MCF 10A (cell line): ENCODE measurements at regions of chr1 and their contacts with region 1.

Region 1: DNA sequence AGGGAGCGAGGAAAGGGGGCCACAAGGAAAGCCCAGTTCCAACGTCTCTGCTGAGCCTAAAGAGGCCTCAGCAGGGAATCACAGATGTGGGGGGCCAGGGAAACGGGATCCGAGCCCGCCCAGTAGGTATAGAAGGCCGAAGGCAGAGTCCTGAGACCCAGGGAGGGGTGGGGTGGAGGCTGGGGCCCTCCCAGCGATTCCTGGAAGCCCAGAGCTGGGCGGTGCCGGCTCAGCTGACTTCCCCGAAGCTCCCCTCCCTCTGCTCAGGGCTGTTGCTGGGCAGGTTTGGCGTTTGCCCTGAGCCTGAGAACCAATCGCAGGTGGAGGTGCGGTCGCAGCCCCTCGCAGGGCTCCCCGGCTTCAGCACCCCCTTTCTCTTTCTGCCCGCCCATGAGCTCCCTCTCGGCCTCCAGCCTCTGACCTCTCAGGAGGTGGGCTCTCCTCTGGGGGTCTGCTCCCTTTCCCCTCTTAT is 12.8 kb downstream of the ADAMTSL4 start:
- DNase-seq: peak; percentile 98
- H3K4me3 Mint-ChIP-seq: peak overlapping the region; percentile 74
- H3K27ac Mint-ChIP-seq: peak overlapping the region; percentile 99
- H3K4me1 Mint-ChIP-seq: peaks cover 52% of the 10 kb centered on the region
- H3K27me3 Mint-ChIP-seq: no peaks in the 10 kb centered on the region
- CTCF ChIP-seq: no peak

Region 2: GRCh38 chr1:150363426-150364230 is 198.4 kb before region 1 on chr1 and contains the start of gene RPRD2:
- CTCF ChIA-PET with region 1: no interaction called
- POLR2A ChIA-PET with region 1: interaction called, 32 read pairs
- intact Hi-C with region 1: no loop called
- DNase-seq: peak; percentile 100
- H3K4me3 Mint-ChIP-seq: peak within 1 kb of the TSS; percentile 92
- H3K27ac Mint-ChIP-seq: peak within 1 kb of the TSS; percentile 97
- H3K4me1 Mint-ChIP-seq: peaks cover 19% of the 10 kb centered on the region
- H3K27me3 Mint-ChIP-seq: no peaks in the 10 kb centered on the region
- CTCF ChIP-seq: no peak
- total RNA-seq, gene RPRD2: 35.2 and 37.4 TPM in 2 replicates

Region 3: GRCh38 chr1:150543500-150544141 is 18.4 kb before region 1 on chr1:
- CTCF ChIA-PET with region 1: interaction called, 77 read pairs
- POLR2A ChIA-PET with region 1: interaction called, 1,801 read pairs
- intact Hi-C with region 1: no loop called
- DNase-seq: peak; percentile 17
- H3K4me3 Mint-ChIP-seq: no peak overlapping the region
- H3K27ac Mint-ChIP-seq: no peak overlapping the region
- H3K4me1 Mint-ChIP-seq: peaks cover 6% of the 10 kb centered on the region
- H3K27me3 Mint-ChIP-seq: no peaks in the 10 kb centered on the region
- CTCF ChIP-seq: no peak

Region 4: DNA sequence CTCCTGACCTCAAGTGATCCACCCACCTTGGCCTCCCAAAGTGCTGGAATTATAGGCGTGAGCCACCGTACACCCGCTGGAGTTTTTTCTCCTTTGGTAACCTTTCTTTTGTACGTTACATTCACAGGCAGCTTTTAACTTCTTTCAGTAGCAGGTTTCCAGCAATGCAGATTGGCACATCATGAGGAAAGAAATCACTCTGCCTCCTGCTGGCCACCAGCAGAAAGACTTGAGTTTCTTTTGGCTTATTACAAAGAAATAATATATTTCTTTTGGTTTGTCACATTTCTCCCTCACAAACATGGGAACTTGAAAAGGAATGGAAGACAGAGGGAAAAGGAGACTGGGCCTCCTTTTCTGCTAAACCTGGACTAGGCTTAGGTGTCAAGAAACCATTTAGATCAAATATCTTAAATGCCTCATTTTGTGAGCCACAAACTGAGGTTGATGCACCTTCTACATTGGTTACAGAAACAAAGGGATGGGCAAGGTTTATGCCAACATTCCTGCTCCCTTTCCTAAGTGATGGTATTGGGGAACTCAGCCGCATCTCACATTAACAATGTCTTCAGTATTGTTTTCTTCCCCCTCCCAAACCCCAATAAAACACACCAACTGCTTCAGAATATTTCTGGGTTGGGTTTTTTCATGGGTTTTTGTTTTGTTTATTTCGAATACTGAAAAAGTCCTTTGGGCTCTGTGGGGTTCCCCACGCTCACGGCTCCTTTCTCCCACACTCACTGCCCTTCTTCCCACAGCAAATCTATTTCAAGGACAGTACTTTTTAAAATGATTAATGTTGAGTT is 59.7 kb after region 1 on chr1:
- CTCF ChIA-PET with region 1: interaction called, 203 read pairs
- POLR2A ChIA-PET with region 1: interaction called, 1,125 read pairs
- intact Hi-C with region 1: loop called (anchors 1 kb)
- DNase-seq: peak; percentile 79
- H3K4me3 Mint-ChIP-seq: no peak overlapping the region
- H3K27ac Mint-ChIP-seq: peak overlapping the region; percentile 33
- H3K4me1 Mint-ChIP-seq: peaks cover 62% of the 10 kb centered on the region
- H3K27me3 Mint-ChIP-seq: no peaks in the 10 kb centered on the region
- CTCF ChIP-seq: peak; percentile 83

Region 5: DNA sequence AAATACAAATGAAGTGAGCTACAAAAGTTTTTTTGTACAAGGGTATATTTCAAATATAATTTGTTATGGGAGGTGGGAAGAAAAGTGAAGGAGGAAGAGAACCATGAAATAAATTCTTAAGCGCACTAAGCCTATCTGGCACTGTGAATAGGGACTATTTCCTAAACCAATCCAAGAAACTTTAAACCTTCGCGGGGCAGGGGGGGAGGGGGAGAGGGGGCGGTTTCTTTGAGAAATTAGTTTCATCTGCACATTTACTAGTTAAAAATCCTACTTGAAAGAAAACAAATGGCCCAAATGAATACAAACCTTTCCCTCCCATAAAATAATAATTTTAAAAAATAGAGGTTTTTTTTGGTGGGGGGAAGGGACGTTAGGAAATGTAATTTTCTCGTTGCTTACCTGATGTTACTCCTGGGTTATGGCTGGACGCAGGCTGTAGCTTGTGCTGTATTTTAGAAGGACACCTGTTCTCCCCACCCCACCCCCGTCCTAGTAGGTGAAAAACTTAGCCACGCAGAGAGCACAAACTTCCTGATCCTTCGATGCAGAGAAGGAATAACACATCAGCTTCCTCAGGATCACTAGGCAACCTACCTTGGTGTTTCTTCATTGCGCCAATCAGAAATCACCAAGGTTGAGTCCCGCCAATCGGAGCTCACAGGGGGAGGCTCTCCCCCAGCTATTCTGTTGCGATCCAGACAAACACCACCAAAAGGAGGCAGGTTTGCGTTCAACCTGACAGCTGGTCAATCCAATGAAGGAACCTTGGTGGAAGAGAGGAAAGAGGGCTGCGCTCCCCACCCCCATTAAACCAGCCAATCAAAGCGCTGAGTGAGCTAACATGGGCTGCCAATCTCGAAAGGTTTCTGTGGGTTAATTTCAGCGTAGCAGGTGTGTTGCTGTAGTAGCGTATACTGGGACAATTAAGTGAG is 134.8 kb after region 1 on chr1 and contains the start of gene GOLPH3L:
- CTCF ChIA-PET with region 1: interaction called, 11 read pairs
- POLR2A ChIA-PET with region 1: interaction called, 47 read pairs
- intact Hi-C with region 1: loop called (anchors 2 kb)
- DNase-seq: peak; percentile 100
- H3K4me3 Mint-ChIP-seq: peak within 1 kb of the TSS; percentile 88
- H3K27ac Mint-ChIP-seq: peak within 1 kb of the TSS; percentile 95
- H3K4me1 Mint-ChIP-seq: peaks cover 25% of the 10 kb centered on the region
- H3K27me3 Mint-ChIP-seq: no peaks in the 10 kb centered on the region
- CTCF ChIP-seq: no peak
- total RNA-seq, gene GOLPH3L: 68.5 and 76.9 TPM in 2 replicates

Region 6: GRCh38 chr1:150881331-150882070 is 319.5 kb after region 1 on chr1:
- CTCF ChIA-PET with region 1: interaction called, 3 read pairs
- POLR2A ChIA-PET with region 1: interaction called, 12 read pairs
- intact Hi-C with region 1: no loop called
- DNase-seq: peak; percentile 96
- H3K4me3 Mint-ChIP-seq: peak overlapping the region; percentile 43
- H3K27ac Mint-ChIP-seq: peak overlapping the region; percentile 77
- H3K4me1 Mint-ChIP-seq: peaks cover 27% of the 10 kb centered on the region
- H3K27me3 Mint-ChIP-seq: no peaks in the 10 kb centered on the region
- CTCF ChIP-seq: no peak

Region 7: GRCh38 chr1:151059078-151059907 is 497.3 kb after region 1 on chr1 and contains the start of gene CDC42SE1:
- CTCF ChIA-PET with region 1: interaction called, 6 read pairs
- POLR2A ChIA-PET with region 1: interaction called, 3 read pairs
- intact Hi-C with region 1: loop called (anchors 5 kb)
- DNase-seq: peak; percentile 85
- H3K4me3 Mint-ChIP-seq: peak within 1 kb of the TSS; percentile 82
- H3K27ac Mint-ChIP-seq: peak within 1 kb of the TSS; percentile 92
- H3K4me1 Mint-ChIP-seq: peaks cover 61% of the 10 kb centered on the region
- H3K27me3 Mint-ChIP-seq: no peaks in the 10 kb centered on the region
- CTCF ChIP-seq: peak; percentile 91
- total RNA-seq, gene CDC42SE1: 134 and 139 TPM in 2 replicates